CD8-positive, alpha-beta T cell (primary cell): ENCODE measurements at regions of chr7 and their contacts with region 1.

Region 1: DNA sequence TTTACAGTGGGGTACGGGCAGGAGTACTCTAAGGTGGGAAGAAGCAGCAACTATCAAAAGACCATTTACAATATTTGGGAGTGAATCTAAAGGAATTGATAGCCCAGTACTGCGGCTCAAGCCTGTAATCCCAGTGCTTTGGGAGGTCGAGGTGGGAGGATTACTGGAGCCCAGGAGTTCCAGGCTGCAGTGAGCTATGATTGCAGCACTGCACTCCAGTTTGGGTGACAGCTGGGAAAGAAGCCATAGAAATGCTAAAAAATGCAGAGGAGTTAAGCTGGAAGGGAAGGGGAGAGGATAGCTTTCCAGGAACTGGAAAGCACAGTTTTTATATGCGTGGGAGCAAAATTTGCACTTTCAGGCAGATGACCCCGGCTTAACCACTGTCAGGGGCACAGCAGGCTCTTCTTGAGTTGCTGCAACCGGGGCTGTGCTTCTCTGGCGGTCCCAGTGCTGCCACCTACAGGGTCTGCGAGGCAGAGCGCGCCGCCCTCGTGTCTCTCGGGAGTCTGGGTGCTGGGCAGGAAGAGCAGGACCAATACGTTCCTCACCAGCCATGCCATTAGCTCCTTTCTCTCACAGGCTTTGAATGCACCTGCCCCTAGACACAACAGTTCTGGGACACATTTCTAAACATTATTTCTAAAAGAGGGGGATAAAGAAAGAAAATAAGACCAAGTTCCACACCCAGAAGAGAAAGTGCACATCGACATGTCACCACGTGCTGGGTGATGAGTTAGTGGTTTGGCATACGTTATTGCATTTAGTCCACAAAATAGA is 10.1 kb upstream of the BMPER start:
- DNase-seq: peak; percentile 38 to 75 (median 58)
- ATAC-seq: peak; percentile 64
- H3K4me3 ChIP-seq: no peak overlapping the region
- H3K4me3 Mint-ChIP-seq: no peak overlapping the region
- H3K27ac ChIP-seq: no peak overlapping the region
- H3K27ac Mint-ChIP-seq: no peak overlapping the region
- H3K4me1 ChIP-seq: no peaks in the 10 kb centered on the region
- H3K4me1 Mint-ChIP-seq: peaks cover 2% of the 10 kb centered on the region
- H3K27me3 ChIP-seq: no peaks in the 10 kb centered on the region
- H3K27me3 Mint-ChIP-seq: peaks cover 49% of the 10 kb centered on the region
- CTCF ChIP-seq: peak; percentile 77

Region 2: GRCh38 chr7:33185786-33186185 is 709.4 kb before region 1 on chr7:
- CTCF ChIA-PET with region 1: interaction called, 4 read pairs
- POLR2A ChIA-PET with region 1: no interaction called
- intact Hi-C with region 1: loop called in 1 of 2 experiments (anchors 2 kb)
- DNase-seq: peak in 2 of 9 experiments; percentile 49 to 62
- ATAC-seq: no peak
- H3K4me3 ChIP-seq: no peak overlapping the region
- H3K4me3 Mint-ChIP-seq: no peak overlapping the region
- H3K27ac ChIP-seq: no peak overlapping the region
- H3K27ac Mint-ChIP-seq: no peak overlapping the region
- H3K4me1 ChIP-seq: peaks cover under 1% of the 10 kb centered on the region
- H3K4me1 Mint-ChIP-seq: peaks cover 6% of the 10 kb centered on the region
- H3K27me3 ChIP-seq: no peaks in the 10 kb centered on the region
- H3K27me3 Mint-ChIP-seq: no peaks in the 10 kb centered on the region
- CTCF ChIP-seq: peak; percentile 63

Region 3: DNA sequence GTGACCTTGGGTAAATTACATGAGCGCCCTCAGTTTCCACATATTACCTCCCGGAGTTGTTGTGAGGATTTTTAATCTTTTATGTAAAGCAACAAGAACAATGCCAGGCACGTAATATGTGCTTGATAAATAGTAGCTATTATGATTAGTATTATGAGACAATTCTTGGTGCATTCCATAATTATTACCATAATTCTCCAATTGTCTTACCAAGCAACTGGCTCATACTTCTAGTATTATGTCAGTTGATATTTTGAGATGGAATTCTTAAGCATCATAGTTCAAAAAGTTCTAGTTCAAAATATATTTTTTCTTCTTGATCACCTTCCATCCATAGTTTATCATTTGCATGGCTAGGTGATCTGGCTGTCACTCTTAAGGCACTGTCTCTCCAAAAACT is 506.9 kb before region 1 on chr7:
- CTCF ChIA-PET with region 1: no interaction called
- POLR2A ChIA-PET with region 1: no interaction called
- intact Hi-C with region 1: no loop called
- DNase-seq: no peak
- ATAC-seq: no peak
- H3K4me3 ChIP-seq: no peak overlapping the region
- H3K4me3 Mint-ChIP-seq: no peak overlapping the region
- H3K27ac ChIP-seq: no peak overlapping the region
- H3K27ac Mint-ChIP-seq: no peak overlapping the region
- H3K4me1 ChIP-seq: no peaks in the 10 kb centered on the region
- H3K4me1 Mint-ChIP-seq: peaks cover under 1% of the 10 kb centered on the region
- H3K27me3 ChIP-seq: no peaks in the 10 kb centered on the region
- H3K27me3 Mint-ChIP-seq: no peaks in the 10 kb centered on the region
- CTCF ChIP-seq: no peak

Region 4: DNA sequence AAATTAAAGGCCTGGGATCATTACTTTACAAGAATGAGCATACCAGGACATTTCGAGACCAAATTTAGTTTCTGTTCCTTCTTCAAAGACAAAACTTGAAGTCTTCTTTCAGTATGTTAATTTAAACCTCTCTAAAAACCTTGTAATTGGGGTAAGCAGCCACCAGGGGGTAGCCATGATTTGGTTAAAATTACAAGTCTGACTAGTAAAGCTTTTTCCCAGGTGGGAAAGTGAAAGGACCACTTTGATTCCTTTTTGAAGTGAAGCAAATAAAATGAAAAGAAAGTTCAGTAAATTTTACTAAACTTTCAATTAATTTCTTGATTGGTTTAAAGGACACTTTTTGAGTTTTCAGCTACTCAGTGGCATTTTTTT is 471.6 kb before region 1 on chr7:
- CTCF ChIA-PET with region 1: no interaction called
- POLR2A ChIA-PET with region 1: no interaction called
- intact Hi-C with region 1: loop called in 1 of 2 experiments (anchors 10 kb)
- DNase-seq: peak in 2 of 9 experiments; percentile 17 to 20
- ATAC-seq: no peak
- H3K4me3 ChIP-seq: no peak overlapping the region
- H3K4me3 Mint-ChIP-seq: no peak overlapping the region
- H3K27ac ChIP-seq: no peak overlapping the region
- H3K27ac Mint-ChIP-seq: no peak overlapping the region
- H3K4me1 ChIP-seq: no peaks in the 10 kb centered on the region
- H3K4me1 Mint-ChIP-seq: no peaks in the 10 kb centered on the region
- H3K27me3 ChIP-seq: no peaks in the 10 kb centered on the region
- H3K27me3 Mint-ChIP-seq: no peaks in the 10 kb centered on the region
- CTCF ChIP-seq: peak; percentile 33

Region 5: GRCh38 chr7:33909318-33909717 is 14.1 kb after region 1 on chr7:
- CTCF ChIA-PET with region 1: interaction called, 15 read pairs
- POLR2A ChIA-PET with region 1: interaction called, 3 read pairs
- intact Hi-C with region 1: no loop called
- DNase-seq: no peak
- ATAC-seq: no peak
- H3K4me3 ChIP-seq: no peak overlapping the region
- H3K4me3 Mint-ChIP-seq: no peak overlapping the region
- H3K27ac ChIP-seq: no peak overlapping the region
- H3K27ac Mint-ChIP-seq: no peak overlapping the region
- H3K4me1 ChIP-seq: no peaks in the 10 kb centered on the region
- H3K4me1 Mint-ChIP-seq: peaks cover 3% of the 10 kb centered on the region
- H3K27me3 ChIP-seq: peaks cover 7% of the 10 kb centered on the region in 2 experiments
- H3K27me3 Mint-ChIP-seq: peaks cover 26% of the 10 kb centered on the region
- CTCF ChIP-seq: no peak

Region 6: GRCh38 chr7:34069630-34070270 is 174.5 kb after region 1 on chr7:
- CTCF ChIA-PET with region 1: no interaction called
- POLR2A ChIA-PET with region 1: no interaction called
- intact Hi-C with region 1: no loop called
- DNase-seq: no peak
- ATAC-seq: no peak
- H3K4me3 ChIP-seq: no peak overlapping the region
- H3K4me3 Mint-ChIP-seq: no peak overlapping the region
- H3K27ac ChIP-seq: no peak overlapping the region
- H3K27ac Mint-ChIP-seq: no peak overlapping the region
- H3K4me1 ChIP-seq: no peaks in the 10 kb centered on the region
- H3K4me1 Mint-ChIP-seq: no peaks in the 10 kb centered on the region
- H3K27me3 ChIP-seq: peaks cover 0 to 3% of the 10 kb centered on the region in 2 experiments
- H3K27me3 Mint-ChIP-seq: peaks cover 4% of the 10 kb centered on the region
- CTCF ChIP-seq: no peak